ENCODE measurements at regions of chr2 and their contacts with region 1.

Region 1: DNA sequence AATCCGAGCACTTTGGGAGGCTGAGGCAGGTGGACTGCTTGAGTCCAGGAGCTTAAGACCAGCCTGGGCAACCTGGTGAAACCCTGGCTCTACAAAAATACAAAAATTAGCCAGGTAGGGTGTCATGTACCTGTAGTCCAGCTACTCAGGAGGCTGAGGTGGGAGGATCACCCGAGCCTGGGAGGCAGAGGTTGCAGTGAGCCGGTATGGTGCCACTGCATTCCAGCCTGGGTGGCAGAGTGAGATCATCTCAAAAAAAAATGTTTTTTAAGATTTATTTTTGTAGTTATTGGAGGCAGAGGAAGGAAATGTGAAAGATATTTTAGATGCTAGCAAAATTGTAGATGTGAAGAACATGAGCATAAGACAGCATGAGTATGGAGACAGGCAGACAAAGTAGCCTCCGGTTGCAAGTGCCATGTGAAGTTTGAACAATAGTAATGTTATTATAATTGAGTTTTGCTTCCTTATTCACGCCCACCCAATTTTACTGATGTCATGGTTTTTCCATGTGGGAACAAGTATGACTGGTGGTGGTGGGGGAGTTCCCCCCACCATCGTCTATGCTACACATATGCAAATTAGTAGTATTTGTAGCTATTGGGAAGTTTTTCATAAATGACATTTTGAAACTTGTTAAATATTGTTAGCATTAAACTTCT is 18.0 kb downstream of the REL start:
- DNase-seq: no peak
- H3K4me3 Mint-ChIP-seq: peak overlapping the region; percentile 54
- H3K27ac Mint-ChIP-seq: peak overlapping the region; percentile 94
- H3K4me1 Mint-ChIP-seq: peaks cover 38% of the 10 kb centered on the region
- H3K27me3 Mint-ChIP-seq: no peaks in the 10 kb centered on the region

Region 2: GRCh38 chr2:60794277-60794863 is 105.0 kb before region 1 on chr2:
- intact Hi-C with region 1: loop called (anchors 1 kb)
- DNase-seq: no peak
- H3K4me3 Mint-ChIP-seq: no peak overlapping the region
- H3K27ac Mint-ChIP-seq: no peak overlapping the region
- H3K4me1 Mint-ChIP-seq: peaks cover 16% of the 10 kb centered on the region
- H3K27me3 Mint-ChIP-seq: no peaks in the 10 kb centered on the region

Region 3: DNA sequence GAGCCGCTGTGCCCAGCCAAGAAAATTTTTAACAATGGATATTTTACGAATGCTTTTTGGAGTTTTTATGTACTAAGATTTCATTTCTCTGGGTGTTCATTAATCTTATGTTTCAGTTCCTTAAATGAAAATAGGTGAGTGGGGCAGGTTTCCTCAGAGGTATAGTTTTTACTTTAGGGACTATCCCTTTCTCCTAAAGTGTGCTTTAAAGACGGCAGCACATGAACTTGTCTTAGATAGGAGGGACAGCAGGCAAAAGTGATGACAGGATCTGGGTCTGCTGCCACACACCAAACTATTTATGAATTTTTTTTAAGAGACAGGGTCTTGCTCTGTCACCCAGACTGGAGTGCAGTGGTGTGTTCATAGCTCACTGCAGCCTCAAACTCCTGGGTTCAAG is 26.0 kb before region 1 on chr2:
- intact Hi-C with region 1: loop called (anchors 1 kb)
- DNase-seq: no peak
- H3K4me3 Mint-ChIP-seq: no peak overlapping the region
- H3K27ac Mint-ChIP-seq: peak overlapping the region; percentile 69
- H3K4me1 Mint-ChIP-seq: peaks cover 26% of the 10 kb centered on the region
- H3K27me3 Mint-ChIP-seq: no peaks in the 10 kb centered on the region

Region 4: DNA sequence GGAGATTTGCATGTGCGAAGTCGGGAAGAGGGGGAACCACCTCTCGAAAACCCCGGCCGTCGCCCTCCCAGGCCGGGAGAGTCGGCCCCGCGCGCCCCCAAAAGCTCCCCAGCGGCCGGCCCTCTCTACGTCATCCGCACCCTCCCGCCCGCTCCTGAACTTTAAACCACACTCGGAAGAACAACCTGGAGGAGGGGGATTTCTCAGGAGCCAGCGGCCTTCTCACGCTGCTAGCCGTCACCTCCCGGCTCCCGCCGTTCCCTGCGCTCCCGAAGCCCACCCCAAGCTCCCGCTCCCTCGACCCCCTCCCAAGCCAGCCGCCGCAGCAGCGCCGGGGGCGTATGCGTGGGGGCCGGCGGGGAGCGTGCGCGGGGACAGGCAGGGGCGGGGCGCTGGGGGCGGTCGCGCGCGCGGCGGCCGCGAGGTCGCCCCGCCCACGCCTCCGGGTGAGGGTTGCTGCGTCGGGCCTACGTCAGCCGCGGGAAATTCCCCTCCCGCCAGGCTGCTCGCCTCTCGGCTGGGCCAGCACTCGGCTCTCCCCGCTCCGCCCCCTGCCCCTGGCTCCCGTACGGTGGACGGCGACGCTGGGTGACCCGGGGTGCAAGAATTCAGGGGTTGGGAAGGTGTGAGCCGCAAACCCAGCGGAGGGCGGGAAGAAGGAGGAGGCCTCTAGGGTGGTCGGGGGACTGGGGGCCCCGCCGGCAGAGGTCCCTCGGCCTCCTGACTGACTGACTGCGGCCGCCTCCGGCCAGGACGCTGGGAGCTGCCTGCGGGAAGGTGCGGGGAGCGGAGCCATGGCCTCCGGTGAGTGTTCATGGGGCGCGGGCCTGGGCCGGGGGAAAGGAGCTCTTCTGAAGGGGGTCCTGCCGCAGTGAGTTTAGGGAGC is 18.1 kb before region 1 on chr2 and contains the start of gene REL:
- intact Hi-C with region 1: loop called (anchors 1 kb)
- DNase-seq: peak; percentile 87
- H3K4me3 Mint-ChIP-seq: peak within 1 kb of the TSS; percentile 99
- H3K27ac Mint-ChIP-seq: peak within 1 kb of the TSS; percentile 97
- H3K4me1 Mint-ChIP-seq: peaks cover 25% of the 10 kb centered on the region
- H3K27me3 Mint-ChIP-seq: no peaks in the 10 kb centered on the region
- total RNA-seq, gene REL: 118 and 123 TPM in 2 replicates

Region 5: DNA sequence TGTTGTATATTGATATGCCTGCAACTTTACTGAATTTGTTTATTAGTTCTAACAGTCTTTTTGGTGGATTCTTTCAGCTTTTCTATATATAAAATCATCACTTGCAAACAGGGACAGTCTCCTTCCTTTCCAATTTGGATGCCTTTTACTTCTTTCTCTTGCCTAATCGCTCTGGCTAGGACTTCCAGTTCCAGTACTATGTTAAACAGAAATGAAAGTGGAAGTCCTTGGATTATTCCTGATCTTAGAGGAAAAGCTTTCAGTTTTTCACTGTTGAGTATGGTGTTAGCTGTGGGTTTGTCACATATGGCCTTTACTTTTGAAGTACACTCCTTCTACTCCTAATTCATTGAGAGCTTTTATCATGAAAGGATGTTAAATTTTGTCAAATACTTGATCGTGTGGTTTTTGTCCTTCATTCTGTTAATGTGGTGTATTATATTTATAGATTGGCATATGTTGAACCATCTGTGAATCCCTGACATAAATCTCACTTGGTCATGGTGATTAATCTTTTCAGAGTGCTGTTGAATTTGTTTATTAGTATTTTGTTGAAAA is 34.9 kb after region 1 on chr2:
- intact Hi-C with region 1: no loop called
- DNase-seq: no peak
- H3K4me3 Mint-ChIP-seq: no peak overlapping the region
- H3K27ac Mint-ChIP-seq: no peak overlapping the region
- H3K4me1 Mint-ChIP-seq: peaks cover 17% of the 10 kb centered on the region
- H3K27me3 Mint-ChIP-seq: no peaks in the 10 kb centered on the region

Region 6: GRCh38 chr2:60945341-60945740 is 46.0 kb after region 1 on chr2:
- intact Hi-C with region 1: no loop called
- DNase-seq: no peak
- H3K4me3 Mint-ChIP-seq: no peak overlapping the region
- H3K27ac Mint-ChIP-seq: no peak overlapping the region
- H3K4me1 Mint-ChIP-seq: peaks cover 9% of the 10 kb centered on the region
- H3K27me3 Mint-ChIP-seq: no peaks in the 10 kb centered on the region

Region 7: DNA sequence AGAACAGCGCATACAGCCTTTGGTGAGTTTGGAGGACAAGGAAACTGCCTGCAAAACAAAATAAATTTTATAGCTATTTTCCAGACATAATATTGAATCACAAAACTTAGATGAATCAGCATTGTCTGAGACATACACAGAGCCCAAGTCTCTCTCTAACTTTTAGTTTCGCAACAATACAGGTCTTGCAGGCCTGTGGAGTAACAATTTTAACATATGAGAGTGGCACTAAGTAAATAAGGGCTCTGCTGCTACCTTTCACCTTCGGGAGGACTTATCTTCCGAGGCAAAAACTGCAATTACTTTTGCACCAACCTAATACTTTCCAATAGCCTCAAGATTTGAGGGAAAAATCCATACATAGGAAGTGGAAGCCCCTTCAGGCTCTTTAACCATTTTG is 62.1 kb after region 1 on chr2:
- intact Hi-C with region 1: no loop called
- DNase-seq: no peak
- H3K4me3 Mint-ChIP-seq: no peak overlapping the region
- H3K27ac Mint-ChIP-seq: no peak overlapping the region
- H3K4me1 Mint-ChIP-seq: peaks cover 18% of the 10 kb centered on the region
- H3K27me3 Mint-ChIP-seq: no peaks in the 10 kb centered on the region

Region 8: GRCh38 chr2:60976875-60977561 is 77.7 kb after region 1 on chr2:
- intact Hi-C with region 1: loop called (anchors 5 kb)
- DNase-seq: no peak
- H3K4me3 Mint-ChIP-seq: no peak overlapping the region
- H3K27ac Mint-ChIP-seq: peak overlapping the region; percentile 23
- H3K4me1 Mint-ChIP-seq: peaks cover 28% of the 10 kb centered on the region
- H3K27me3 Mint-ChIP-seq: no peaks in the 10 kb centered on the region